PC-3 (cell line): ENCODE measurements at regions of chr12 and their contacts with region 1.

Region 1: GRCh38 chr12:111599459-111600204 is 517 bp upstream of the ATXN2 start:
- DNase-seq: peak; percentile 81
- ATAC-seq: peak; percentile 57
- H3K4me3 ChIP-seq: peak overlapping the region; percentile 87
- H3K27ac ChIP-seq: peak overlapping the region; percentile 77
- H3K4me1 ChIP-seq: peaks cover 28% of the 10 kb centered on the region
- H3K27me3 ChIP-seq: no peaks in the 10 kb centered on the region
- CTCF ChIP-seq: no peak

Region 2: GRCh38 chr12:111529424-111530368 is 69.9 kb before region 1 on chr12:
- CTCF ChIA-PET with region 1: no interaction called
- POLR2A ChIA-PET with region 1: no interaction called
- intact Hi-C with region 1: loop called (anchors 5 kb)
- DNase-seq: peak; percentile 71
- ATAC-seq: peak; percentile 67
- H3K4me3 ChIP-seq: no peak overlapping the region
- H3K27ac ChIP-seq: no peak overlapping the region
- H3K4me1 ChIP-seq: no peaks in the 10 kb centered on the region
- H3K27me3 ChIP-seq: no peaks in the 10 kb centered on the region
- CTCF ChIP-seq: peak; percentile 92

Region 3: DNA sequence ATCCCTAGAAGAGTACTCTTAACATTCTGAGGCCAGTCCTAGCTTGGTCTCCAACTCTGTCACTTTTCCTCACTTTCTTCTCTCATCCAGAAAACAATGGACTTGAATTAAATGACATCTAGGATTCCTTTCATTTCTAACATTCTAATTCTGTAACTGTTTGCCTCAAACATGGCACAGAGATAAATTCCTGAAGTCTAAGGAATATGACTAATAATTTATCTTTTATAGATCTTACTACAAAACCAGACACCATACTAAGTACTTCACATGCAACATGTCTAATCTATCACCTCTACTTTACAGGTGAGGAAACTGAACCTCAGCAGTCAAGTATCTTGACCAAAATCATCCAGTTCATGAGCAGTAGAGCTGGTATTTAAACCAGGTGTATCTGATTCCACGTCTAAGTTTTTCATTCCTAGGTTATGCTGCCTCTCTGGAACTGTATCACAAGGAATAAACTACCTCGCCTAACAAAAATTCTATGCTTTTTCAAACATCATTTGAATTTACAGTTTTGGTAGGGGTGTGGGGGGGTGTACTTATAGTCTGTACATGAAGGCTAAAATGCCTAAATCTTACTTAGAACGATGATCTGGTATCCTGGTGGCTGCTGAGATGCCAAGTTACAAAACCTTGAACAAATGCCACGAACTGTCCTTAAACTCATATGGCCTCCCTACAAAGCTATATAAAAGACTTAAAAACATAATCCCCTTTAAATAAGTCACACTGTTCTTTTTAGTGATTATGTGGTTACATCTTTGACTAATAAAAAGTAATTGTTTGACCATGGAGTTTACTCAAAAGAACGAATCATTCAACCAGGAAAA is 42.1 kb before region 1 on chr12:
- CTCF ChIA-PET with region 1: no interaction called
- POLR2A ChIA-PET with region 1: no interaction called
- intact Hi-C with region 1: loop called (anchors 5 kb)
- DNase-seq: peak; percentile 40
- ATAC-seq: peak; percentile 65
- H3K4me3 ChIP-seq: no peak overlapping the region; the same call in 1 of the 2 replicates
- H3K27ac ChIP-seq: peak overlapping the region; percentile 54
- H3K4me1 ChIP-seq: peaks cover 18% of the 10 kb centered on the region
- H3K27me3 ChIP-seq: no peaks in the 10 kb centered on the region
- CTCF ChIP-seq: no peak

Region 4: GRCh38 chr12:111578274-111578970 is 21.2 kb before region 1 on chr12:
- CTCF ChIA-PET with region 1: interaction called, 4 read pairs
- POLR2A ChIA-PET with region 1: interaction called, 3 read pairs
- intact Hi-C with region 1: loop called (anchors 2 kb)
- DNase-seq: peak; percentile 84
- ATAC-seq: peak; percentile 99
- H3K4me3 ChIP-seq: peak overlapping the region; percentile 3; the same call in 1 of the 2 replicates
- H3K27ac ChIP-seq: peak overlapping the region; percentile 64
- H3K4me1 ChIP-seq: peaks cover 24% of the 10 kb centered on the region
- H3K27me3 ChIP-seq: no peaks in the 10 kb centered on the region
- CTCF ChIP-seq: no peak

Region 5: GRCh38 chr12:111673503-111673902 is 73.9 kb after region 1 on chr12:
- CTCF ChIA-PET with region 1: no interaction called
- POLR2A ChIA-PET with region 1: no interaction called
- intact Hi-C with region 1: no loop called
- DNase-seq: peak; percentile 55
- ATAC-seq: peak; percentile 55
- H3K4me3 ChIP-seq: no peak overlapping the region
- H3K27ac ChIP-seq: no peak overlapping the region
- H3K4me1 ChIP-seq: no peaks in the 10 kb centered on the region
- H3K27me3 ChIP-seq: no peaks in the 10 kb centered on the region
- CTCF ChIP-seq: peak; percentile 61